ENCODE measurements at regions of chrX and their contacts with region 1.

Region 1: GRCh38 chrX:153507484-153508178 is 9.8 kb upstream of the ATP2B3 start:
- DNase-seq: peak; percentile 89
- ATAC-seq: peak; percentile 100
- H3K4me3 Mint-ChIP-seq: no peak overlapping the region
- H3K27ac Mint-ChIP-seq: no peak overlapping the region
- H3K4me1 Mint-ChIP-seq: no peaks in the 10 kb centered on the region
- H3K27me3 Mint-ChIP-seq: no peaks in the 10 kb centered on the region

Region 2: GRCh38 chrX:152958524-152959465 is 548.8 kb before region 1 on chrX:
- CTCF ChIA-PET with region 1: no interaction called
- POLR2A ChIA-PET with region 1: no interaction called
- intact Hi-C with region 1: loop called (anchors 1 to 5 kb)
- DNase-seq: peak; percentile 91
- ATAC-seq: peak; percentile 98
- H3K4me3 Mint-ChIP-seq: peak overlapping the region; percentile 52
- H3K27ac Mint-ChIP-seq: peak overlapping the region; percentile 91
- H3K4me1 Mint-ChIP-seq: peaks cover 6% of the 10 kb centered on the region
- H3K27me3 Mint-ChIP-seq: no peaks in the 10 kb centered on the region

Region 3: GRCh38 chrX:153032397-153033118 is 475.1 kb before region 1 on chrX:
- CTCF ChIA-PET with region 1: no interaction called
- POLR2A ChIA-PET with region 1: no interaction called
- intact Hi-C with region 1: loop called (anchors 1 to 5 kb)
- DNase-seq: peak; percentile 78
- ATAC-seq: peak; percentile 85
- H3K4me3 Mint-ChIP-seq: peak overlapping the region; percentile 76
- H3K27ac Mint-ChIP-seq: peak overlapping the region; percentile 84
- H3K4me1 Mint-ChIP-seq: peaks cover 2% of the 10 kb centered on the region
- H3K27me3 Mint-ChIP-seq: no peaks in the 10 kb centered on the region

Region 4: GRCh38 chrX:153333768-153334645 is 173.6 kb before region 1 on chrX and contains the start of gene ZNF275:
- CTCF ChIA-PET with region 1: no interaction called
- POLR2A ChIA-PET with region 1: no interaction called
- intact Hi-C with region 1: loop called in 1 of 2 experiments (anchors 5 kb)
- DNase-seq: peak; percentile 87
- ATAC-seq: peak; percentile 93
- H3K4me3 Mint-ChIP-seq: peak within 1 kb of the TSS; percentile 80
- H3K27ac Mint-ChIP-seq: peak within 1 kb of the TSS; percentile 81
- H3K4me1 Mint-ChIP-seq: peaks cover 45% of the 10 kb centered on the region
- H3K27me3 Mint-ChIP-seq: no peaks in the 10 kb centered on the region
- total RNA-seq, gene ZNF275: 11.5 to 13.4 TPM

Region 5: GRCh38 chrX:153400146-153401127 is 107.2 kb before region 1 on chrX:
- CTCF ChIA-PET with region 1: interaction called, 5 read pairs
- POLR2A ChIA-PET with region 1: interaction called, 3 read pairs
- intact Hi-C with region 1: loop called in 1 of 2 experiments (anchors 5 kb)
- DNase-seq: peak; percentile 81
- ATAC-seq: peak; percentile 86
- H3K4me3 Mint-ChIP-seq: no peak overlapping the region
- H3K27ac Mint-ChIP-seq: no peak overlapping the region
- H3K4me1 Mint-ChIP-seq: no peaks in the 10 kb centered on the region
- H3K27me3 Mint-ChIP-seq: no peaks in the 10 kb centered on the region

Region 6: DNA sequence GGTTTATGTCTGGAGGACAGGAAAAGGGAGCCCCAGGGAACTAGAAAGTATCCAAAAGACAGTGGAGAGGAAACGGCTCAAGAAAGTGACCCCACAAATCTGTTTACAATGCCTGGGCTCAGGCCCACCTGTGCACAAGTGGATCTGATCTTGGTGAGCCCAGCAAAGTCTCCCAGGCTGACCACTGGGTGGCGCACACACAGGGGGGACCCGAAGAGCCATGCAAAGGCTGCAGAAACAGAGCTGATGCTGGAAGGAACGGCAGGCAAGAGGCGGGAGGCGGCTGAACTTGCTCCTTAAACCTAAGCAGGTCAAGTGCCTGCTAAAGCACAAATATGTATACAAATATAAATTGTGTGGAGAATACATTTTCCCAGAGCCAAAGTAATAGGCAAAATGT is 46.8 kb before region 1 on chrX:
- CTCF ChIA-PET with region 1: interaction called, 15 read pairs
- POLR2A ChIA-PET with region 1: no interaction called
- intact Hi-C with region 1: loop called in 1 of 2 experiments (anchors 1 kb)
- DNase-seq: peak; percentile 66
- ATAC-seq: peak; percentile 74
- H3K4me3 Mint-ChIP-seq: no peak overlapping the region
- H3K27ac Mint-ChIP-seq: no peak overlapping the region
- H3K4me1 Mint-ChIP-seq: no peaks in the 10 kb centered on the region
- H3K27me3 Mint-ChIP-seq: no peaks in the 10 kb centered on the region

Region 7: DNA sequence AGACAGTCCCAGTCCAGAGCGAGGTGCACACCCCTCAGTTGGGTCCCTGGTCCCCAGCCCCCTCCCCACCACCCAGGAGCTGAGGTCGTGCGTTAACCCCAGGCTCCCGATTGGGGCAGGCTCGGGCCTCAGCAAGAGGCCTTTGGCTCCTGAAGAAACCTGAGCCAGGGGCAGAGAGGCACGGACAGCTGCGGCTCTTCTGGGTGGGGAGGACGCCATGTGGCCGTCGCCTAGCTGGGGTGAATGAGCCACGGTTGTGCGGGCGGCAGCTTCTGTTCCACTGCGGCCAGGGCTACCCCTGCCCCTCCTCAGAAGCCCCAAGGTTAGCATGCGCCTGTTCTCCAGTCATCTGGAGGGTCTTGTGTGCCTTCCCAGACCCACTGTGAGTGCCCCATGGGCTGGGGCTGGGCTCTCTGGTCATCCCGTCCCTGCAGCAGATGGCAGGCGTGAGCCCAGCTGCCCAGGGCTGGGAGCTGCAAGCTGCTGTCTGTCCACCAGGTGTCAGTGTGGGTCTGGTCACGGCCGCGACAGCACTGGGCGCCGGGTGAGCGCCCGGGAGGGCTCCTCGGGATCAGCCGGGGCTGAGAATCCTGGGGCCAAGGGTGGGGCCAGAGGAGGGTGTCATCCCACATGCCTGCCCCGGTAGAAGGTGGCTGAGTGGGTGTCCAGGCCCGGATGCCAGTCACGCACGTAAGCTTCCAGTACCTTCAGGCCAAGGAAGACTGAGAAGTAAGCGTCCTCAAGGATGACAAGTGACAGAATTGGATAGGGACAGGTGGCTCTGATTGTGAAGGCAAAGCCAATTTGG is 31.7 kb after region 1 on chrX:
- CTCF ChIA-PET with region 1: interaction called, 11 read pairs
- POLR2A ChIA-PET with region 1: no interaction called
- intact Hi-C with region 1: no loop called
- DNase-seq: peak; percentile 73
- ATAC-seq: peak; percentile 93
- H3K4me3 Mint-ChIP-seq: no peak overlapping the region
- H3K27ac Mint-ChIP-seq: no peak overlapping the region
- H3K4me1 Mint-ChIP-seq: no peaks in the 10 kb centered on the region
- H3K27me3 Mint-ChIP-seq: peaks cover 2% of the 10 kb centered on the region